Activated CD4-positive, alpha-beta memory T cell treated with anti-CD3 and anti-CD28 coated beads for 36 hours (primary cell): ENCODE measurements at regions of chr1 and their contacts with region 1.

Region 1: GRCh38 chr1:18949686-18950400 is 6.6 kb downstream of the IFFO2 start:
- DNase-seq: peak; percentile 49
- H3K4me3 Mint-ChIP-seq: peak overlapping the region; percentile 80
- H3K27ac Mint-ChIP-seq: peak overlapping the region; percentile 98
- H3K4me1 Mint-ChIP-seq: peaks cover 90% of the 10 kb centered on the region
- H3K27me3 Mint-ChIP-seq: no peaks in the 10 kb centered on the region

Region 2: GRCh38 chr1:18761948-18762850 is 187.6 kb before region 1 on chr1:
- CTCF ChIA-PET with region 1: no interaction called
- POLR2A ChIA-PET with region 1: no interaction called
- intact Hi-C with region 1: no loop called
- DNase-seq: no peak
- H3K4me3 Mint-ChIP-seq: no peak overlapping the region
- H3K27ac Mint-ChIP-seq: no peak overlapping the region
- H3K4me1 Mint-ChIP-seq: no peaks in the 10 kb centered on the region
- H3K27me3 Mint-ChIP-seq: peaks cover 30% of the 10 kb centered on the region

Region 3: GRCh38 chr1:18890711-18891425 is 59.0 kb before region 1 on chr1:
- CTCF ChIA-PET with region 1: no interaction called
- POLR2A ChIA-PET with region 1: no interaction called
- intact Hi-C with region 1: no loop called
- DNase-seq: no peak
- H3K4me3 Mint-ChIP-seq: no peak overlapping the region
- H3K27ac Mint-ChIP-seq: no peak overlapping the region
- H3K4me1 Mint-ChIP-seq: no peaks in the 10 kb centered on the region
- H3K27me3 Mint-ChIP-seq: no peaks in the 10 kb centered on the region

Region 4: GRCh38 chr1:18965206-18966173 is 15.6 kb after region 1 on chr1:
- CTCF ChIA-PET with region 1: interaction called, 4 read pairs
- POLR2A ChIA-PET with region 1: interaction called, 5 read pairs
- intact Hi-C with region 1: loop called (anchors 1 kb)
- DNase-seq: peak; percentile 78
- H3K4me3 Mint-ChIP-seq: no peak overlapping the region
- H3K27ac Mint-ChIP-seq: peak overlapping the region; percentile 70
- H3K4me1 Mint-ChIP-seq: peaks cover 14% of the 10 kb centered on the region
- H3K27me3 Mint-ChIP-seq: peaks cover 3% of the 10 kb centered on the region

Region 5: DNA sequence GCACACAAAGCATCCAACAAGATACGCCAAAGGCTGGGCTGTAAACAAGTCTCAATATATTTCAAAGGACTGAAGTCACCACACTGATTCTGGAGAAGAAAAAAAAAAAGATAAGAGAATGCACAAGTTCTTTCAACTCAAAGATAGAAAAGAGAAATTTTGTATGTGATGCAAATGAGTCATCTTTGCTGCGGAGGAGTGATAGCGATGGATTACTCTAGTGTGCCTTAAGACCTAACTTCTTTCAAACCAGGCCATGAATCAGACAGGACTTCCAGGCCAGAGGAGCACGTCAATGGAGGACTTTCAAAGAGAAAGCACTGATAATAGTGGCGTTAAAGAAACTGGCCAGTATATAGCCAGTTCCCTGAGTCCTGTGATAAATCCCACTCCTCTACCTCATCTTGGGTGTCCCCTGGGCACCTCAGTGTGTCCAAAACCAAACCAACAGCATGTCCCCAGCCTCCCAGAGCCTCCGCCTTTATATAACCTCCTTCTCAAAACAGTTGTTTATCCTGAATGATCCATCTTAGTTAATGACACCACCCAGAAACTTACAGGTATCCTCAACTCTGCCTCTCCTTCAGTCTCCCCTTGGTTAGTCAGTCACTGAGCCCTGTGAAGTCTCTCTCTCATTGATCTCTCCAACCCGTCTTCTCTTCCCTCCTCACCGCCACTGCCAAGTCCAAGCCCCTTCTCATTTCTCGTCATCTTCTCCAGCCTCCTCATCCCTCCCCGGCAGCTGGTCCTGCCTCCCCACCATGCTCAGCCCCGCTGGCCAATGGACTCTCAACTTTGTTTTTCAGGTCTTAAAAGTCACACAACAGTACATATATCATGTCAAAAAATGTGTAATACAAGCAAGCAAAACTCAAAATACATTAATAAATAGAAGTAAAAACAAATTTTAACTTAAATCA is 53.8 kb after region 1 on chr1:
- CTCF ChIA-PET with region 1: no interaction called
- POLR2A ChIA-PET with region 1: no interaction called
- intact Hi-C with region 1: no loop called
- DNase-seq: peak; percentile 54
- H3K4me3 Mint-ChIP-seq: peak overlapping the region; percentile 13
- H3K27ac Mint-ChIP-seq: peak overlapping the region; percentile 90
- H3K4me1 Mint-ChIP-seq: peaks cover 27% of the 10 kb centered on the region
- H3K27me3 Mint-ChIP-seq: peaks cover 5% of the 10 kb centered on the region

Region 6: GRCh38 chr1:19074902-19075721 is 125.3 kb after region 1 on chr1:
- CTCF ChIA-PET with region 1: interaction called, 8 read pairs
- POLR2A ChIA-PET with region 1: interaction called, 4 read pairs
- intact Hi-C with region 1: loop called (anchors 1 kb)
- DNase-seq: no peak
- H3K4me3 Mint-ChIP-seq: no peak overlapping the region
- H3K27ac Mint-ChIP-seq: peak overlapping the region; percentile 81
- H3K4me1 Mint-ChIP-seq: peaks cover 55% of the 10 kb centered on the region
- H3K27me3 Mint-ChIP-seq: no peaks in the 10 kb centered on the region